ENCODE measurements at regions of chr10 and their contacts with region 1.

Region 1: DNA sequence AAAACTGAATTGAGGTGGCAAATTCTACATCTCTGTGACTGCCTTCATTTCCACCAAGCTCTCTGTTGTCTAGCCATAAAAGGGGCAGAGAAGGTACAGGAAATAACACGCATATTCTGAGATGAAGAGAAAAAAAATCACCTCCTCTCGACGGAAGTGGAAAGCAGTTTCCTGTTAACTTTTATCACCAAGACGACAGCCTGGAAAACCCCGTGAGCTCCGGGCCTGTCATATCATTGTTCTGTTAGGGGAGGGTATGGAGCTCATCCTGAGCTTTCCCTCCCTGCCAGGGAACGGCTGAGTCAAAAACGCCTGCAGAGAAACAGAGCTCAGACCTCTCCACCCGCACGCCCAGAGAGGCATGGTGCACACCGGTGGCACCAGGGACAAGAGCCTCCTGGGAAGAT is 200.3 kb downstream of the PRPF18 start:
- DNase-seq: peak; percentile 79
- H3K4me3 ChIP-seq: peak overlapping the region; percentile 49
- H3K27ac ChIP-seq: peak overlapping the region; percentile 56
- H3K4me1 ChIP-seq: peaks cover 46% of the 10 kb centered on the region
- CTCF ChIP-seq: no peak

Region 2: DNA sequence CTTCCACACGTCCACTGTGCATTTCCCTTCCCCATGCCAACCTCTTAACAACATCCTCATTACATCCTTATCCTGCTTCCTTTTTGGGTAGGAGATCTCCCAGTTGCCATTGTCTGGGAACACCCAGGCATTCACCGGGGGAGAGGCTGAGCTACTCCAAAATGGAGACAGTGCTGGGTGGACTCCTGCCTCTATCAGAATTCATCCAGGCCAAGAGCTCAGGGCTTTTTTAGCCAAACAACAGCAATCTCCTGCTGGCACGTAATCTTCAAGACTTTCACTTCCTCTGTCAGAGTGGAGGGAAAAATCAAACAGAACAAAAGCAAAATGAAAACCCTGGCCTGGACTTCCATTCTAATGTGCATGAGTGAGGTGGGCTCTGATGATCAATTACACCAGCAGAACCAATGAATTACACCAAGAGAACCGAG is 44.7 kb after region 1 on chr10:
- CTCF ChIA-PET with region 1: interaction called, 3 read pairs
- POLR2A ChIA-PET with region 1: interaction called, 5 read pairs
- intact Hi-C with region 1: loop called (anchors 1 kb)
- DNase-seq: peak; percentile 88
- H3K4me3 ChIP-seq: peak overlapping the region; percentile 49
- H3K27ac ChIP-seq: peak overlapping the region; percentile 67
- H3K4me1 ChIP-seq: peaks cover 40% of the 10 kb centered on the region
- CTCF ChIP-seq: no peak

Region 3: DNA sequence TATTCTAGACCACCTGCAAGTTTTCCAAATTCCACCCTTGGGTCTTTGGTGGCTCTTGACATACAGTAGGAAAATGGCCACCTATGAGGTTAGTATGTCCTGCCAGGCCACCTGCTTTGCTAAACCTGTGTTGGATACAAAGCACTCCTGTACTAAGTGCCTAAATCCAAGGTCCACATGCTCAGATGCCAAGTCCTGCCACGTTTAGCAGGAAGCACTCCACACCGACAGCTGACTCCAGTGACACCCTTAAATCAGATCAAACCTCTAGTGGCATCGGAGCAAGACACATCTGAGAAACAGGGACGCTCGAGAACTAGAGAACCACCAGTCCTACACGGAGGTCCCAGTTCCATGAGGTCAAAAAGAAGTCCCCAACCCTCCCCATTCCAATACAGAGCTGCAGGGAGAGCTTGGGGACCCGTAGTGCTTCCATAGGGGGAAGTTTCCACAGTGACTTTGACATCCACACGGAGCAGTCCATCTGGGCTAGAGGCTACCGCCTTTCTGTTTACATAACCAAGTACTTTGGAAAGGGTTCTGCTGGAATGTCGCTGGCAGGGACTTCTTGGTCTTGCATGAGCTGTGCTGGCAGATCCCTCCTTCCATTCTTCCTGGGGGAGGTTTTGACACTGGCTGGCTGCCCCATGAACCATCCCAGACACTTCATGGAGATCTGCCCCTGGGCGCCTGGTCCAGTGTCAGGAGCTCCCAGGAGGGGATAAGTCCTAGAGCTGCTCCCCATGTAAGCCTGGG is 90.3 kb after region 1 on chr10:
- CTCF ChIA-PET with region 1: no interaction called
- POLR2A ChIA-PET with region 1: no interaction called
- intact Hi-C with region 1: loop called (anchors 10 kb)
- DNase-seq: no peak
- H3K4me3 ChIP-seq: no peak overlapping the region
- H3K27ac ChIP-seq: no peak overlapping the region
- H3K4me1 ChIP-seq: peaks cover 15% of the 10 kb centered on the region
- CTCF ChIP-seq: no peak

Region 4: DNA sequence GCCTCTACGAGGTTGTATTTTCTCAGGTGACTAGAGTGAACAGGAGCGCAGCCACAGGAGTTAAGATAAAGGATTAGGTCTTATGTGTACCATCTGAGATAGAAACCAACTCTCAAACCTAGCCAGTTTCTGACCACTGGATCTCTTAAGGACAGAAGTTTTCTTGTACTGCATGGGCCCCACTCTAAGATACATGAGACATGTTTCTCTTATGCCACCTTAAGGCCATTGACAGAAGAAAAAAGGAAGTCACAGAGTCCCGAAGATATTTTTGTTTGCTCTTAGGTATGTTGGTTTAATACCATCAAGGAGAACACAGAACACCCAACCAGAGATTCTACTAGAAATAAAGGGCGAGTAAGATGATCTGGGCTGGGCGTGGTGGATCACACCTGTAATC is 207.9 kb after region 1 on chr10:
- CTCF ChIA-PET with region 1: no interaction called
- POLR2A ChIA-PET with region 1: interaction called, 4 read pairs
- intact Hi-C with region 1: loop called (anchors 5 kb)
- DNase-seq: peak; percentile 9
- H3K4me3 ChIP-seq: no peak overlapping the region
- H3K27ac ChIP-seq: no peak overlapping the region
- H3K4me1 ChIP-seq: no peaks in the 10 kb centered on the region
- CTCF ChIP-seq: 0 out of 2 replicates have a peak, but pooled peaks have one; percentile 16

Region 5: DNA sequence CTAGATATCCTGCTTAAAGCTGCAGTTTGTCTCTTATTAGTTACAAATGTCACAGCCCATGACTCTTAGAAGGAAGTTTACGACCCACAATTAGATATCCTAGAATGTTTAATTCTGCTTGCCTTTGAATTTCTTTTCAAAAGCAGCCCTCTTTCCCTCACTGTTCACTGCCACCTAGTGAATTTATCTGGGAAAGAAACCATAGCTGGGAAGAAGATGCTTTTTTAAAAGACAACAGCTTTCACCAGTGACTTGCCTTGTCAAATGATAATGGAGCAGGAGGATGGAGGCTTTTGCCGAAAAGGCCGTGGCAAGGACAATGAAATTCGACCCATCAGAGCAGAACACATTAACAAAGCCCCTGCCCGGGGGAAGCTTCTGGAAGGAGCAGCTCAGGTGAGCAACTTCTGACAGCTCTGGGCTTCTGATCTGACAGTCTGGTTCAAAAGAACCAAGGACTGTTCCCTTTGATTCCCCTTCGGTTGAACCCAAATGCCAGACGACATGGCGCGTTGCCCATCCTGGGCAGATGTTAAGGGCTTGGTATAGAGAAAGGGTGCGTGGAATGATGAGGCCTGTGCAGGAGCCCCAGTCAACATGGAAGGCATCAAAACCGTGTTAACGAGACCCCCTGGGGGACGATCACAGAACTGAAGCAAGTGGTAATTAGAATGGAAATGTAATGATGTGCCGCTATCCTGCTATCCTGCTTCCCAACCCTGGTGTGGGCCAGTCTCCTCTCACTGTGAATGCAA is 306.9 kb after region 1 on chr10:
- CTCF ChIA-PET with region 1: no interaction called
- POLR2A ChIA-PET with region 1: no interaction called
- intact Hi-C with region 1: loop called (anchors 10 kb)
- DNase-seq: no peak
- H3K4me3 ChIP-seq: no peak overlapping the region
- H3K27ac ChIP-seq: no peak overlapping the region
- H3K4me1 ChIP-seq: no peaks in the 10 kb centered on the region
- CTCF ChIP-seq: peak; percentile 24; the same call in 1 of the 2 replicates

Region 6: DNA sequence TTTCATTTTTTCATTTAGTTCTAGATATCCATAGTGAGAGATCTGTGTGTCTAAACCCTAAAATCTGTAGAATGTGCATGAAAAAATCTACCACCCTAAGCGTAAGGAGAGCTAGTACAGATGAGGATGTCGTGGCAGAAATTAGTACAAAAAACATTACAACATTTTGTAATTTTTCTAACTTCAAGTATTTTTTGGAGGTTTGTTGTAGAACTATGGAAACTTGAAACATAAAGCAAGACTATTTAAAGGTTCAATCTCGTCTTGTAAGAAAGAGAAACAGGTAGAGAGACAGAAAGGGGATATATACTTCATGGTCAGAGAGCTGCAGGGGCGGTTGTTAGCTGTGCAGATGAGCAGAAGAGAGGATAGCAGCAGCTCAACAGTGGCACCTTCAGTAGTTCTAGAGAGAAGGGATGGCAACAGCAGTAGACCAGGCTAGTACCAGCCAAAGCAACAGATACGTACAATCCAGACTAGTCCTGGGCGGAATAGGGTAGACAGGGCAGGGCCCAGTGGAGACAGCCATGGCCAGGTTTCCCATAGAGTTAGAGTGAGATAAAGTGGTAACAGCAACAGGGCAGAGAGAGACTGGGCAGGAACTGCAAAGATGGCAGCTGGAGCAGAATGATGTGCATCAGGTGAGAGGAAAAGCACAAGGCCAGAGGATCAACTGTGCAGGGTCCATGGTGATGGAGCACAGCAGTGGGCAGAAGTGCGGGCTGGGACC is 398.5 kb after region 1 on chr10:
- CTCF ChIA-PET with region 1: no interaction called
- POLR2A ChIA-PET with region 1: interaction called, 4 read pairs
- intact Hi-C with region 1: loop called (anchors 2 kb)
- DNase-seq: peak; percentile 64
- H3K4me3 ChIP-seq: peak overlapping the region; percentile 35
- H3K27ac ChIP-seq: peak overlapping the region; percentile 48
- H3K4me1 ChIP-seq: peaks cover 25% of the 10 kb centered on the region
- CTCF ChIP-seq: no peak

Region 7: DNA sequence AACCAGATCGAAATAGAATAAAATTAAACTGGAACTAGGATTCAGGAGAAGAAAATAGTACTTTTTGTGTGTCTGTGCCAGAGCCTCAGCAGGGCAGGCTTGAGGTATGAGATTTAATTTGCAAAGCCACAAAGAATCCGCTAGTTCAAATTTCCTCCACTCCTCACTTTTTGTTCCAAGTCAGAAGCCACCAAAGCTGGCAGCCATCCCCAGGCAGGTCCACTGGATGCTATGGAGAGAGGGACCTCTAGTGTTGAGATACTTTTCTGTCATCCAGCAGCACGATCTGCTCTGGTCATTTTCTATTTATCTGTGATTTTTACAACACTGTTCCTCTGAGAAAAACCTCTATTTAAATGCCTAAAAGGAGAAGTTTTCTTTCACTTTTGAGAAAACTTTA is 691.6 kb after region 1 on chr10:
- CTCF ChIA-PET with region 1: no interaction called
- POLR2A ChIA-PET with region 1: no interaction called
- intact Hi-C with region 1: loop called (anchors 10 kb)
- DNase-seq: peak; percentile 18
- H3K4me3 ChIP-seq: no peak overlapping the region
- H3K27ac ChIP-seq: no peak overlapping the region
- H3K4me1 ChIP-seq: no peaks in the 10 kb centered on the region
- CTCF ChIP-seq: peak; percentile 66